ENCODE measurements at regions of chr12 and their contacts with region 1.

Region 1: GRCh38 chr12:14167005-14167628 is 185.7 kb upstream of the GRIN2B start:
- DNase-seq: peak; percentile 38 to 61 (median 47)
- ATAC-seq: peak; percentile 61; the same call in 2 of the 3 replicates
- H3K4me3 ChIP-seq: no peak overlapping the region
- H3K27ac ChIP-seq: no peak overlapping the region
- H3K4me1 ChIP-seq: no peaks in the 10 kb centered on the region
- H3K27me3 ChIP-seq: peaks cover 0 to 3% of the 10 kb centered on the region in 2 experiments; a peak in 1 of 5 replicates
- CTCF ChIP-seq: peak; percentile 73 to 84 (median 73)
- EP300 ChIP-seq: no peak
- POLR2A ChIP-seq: no peak
- RAD21 ChIP-seq: peak; percentile 69 to 77

Region 2: GRCh38 chr12:13255792-13256691 is 911.1 kb before region 1 on chr12:
- CTCF ChIA-PET with region 1: no interaction called
- POLR2A ChIA-PET with region 1: no interaction called
- in situ Hi-C with region 1: no loop called
- intact Hi-C with region 1: loop called (anchors 5 kb)
- DNase-seq: peak; percentile 86 to 92 (median 90)
- ATAC-seq: peak; percentile 100
- H3K4me3 ChIP-seq: no peak overlapping the region
- H3K27ac ChIP-seq: no peak overlapping the region
- H3K4me1 ChIP-seq: peaks cover 0 to 3% of the 10 kb centered on the region in 2 experiments; a peak in 1 of 5 replicates
- H3K27me3 ChIP-seq: no peaks in the 10 kb centered on the region; a peak in 1 of 5 replicates
- CTCF ChIP-seq: peak; percentile 88 to 91 (median 90)
- EP300 ChIP-seq: no peak
- POLR2A ChIP-seq: no peak
- RAD21 ChIP-seq: peak; percentile 59 to 72

Region 3: GRCh38 chr12:13278249-13278787 is 888.8 kb before region 1 on chr12:
- CTCF ChIA-PET with region 1: no interaction called
- POLR2A ChIA-PET with region 1: no interaction called
- in situ Hi-C with region 1: loop called (anchors 10 kb)
- intact Hi-C with region 1: no loop called
- DNase-seq: peak; percentile 63 to 79 (median 76)
- ATAC-seq: peak; percentile 100
- H3K4me3 ChIP-seq: no peak overlapping the region
- H3K27ac ChIP-seq: no peak overlapping the region
- H3K4me1 ChIP-seq: peaks cover 0 to 8% of the 10 kb centered on the region in 2 experiments; a peak in 2 of 5 replicates
- H3K27me3 ChIP-seq: peaks cover 0 to 25% of the 10 kb centered on the region in 2 experiments; a peak in 2 of 5 replicates
- CTCF ChIP-seq: peak; percentile 73 to 79 (median 78)
- EP300 ChIP-seq: no peak
- POLR2A ChIP-seq: no peak
- RAD21 ChIP-seq: peak; percentile 49 to 64

Region 4: DNA sequence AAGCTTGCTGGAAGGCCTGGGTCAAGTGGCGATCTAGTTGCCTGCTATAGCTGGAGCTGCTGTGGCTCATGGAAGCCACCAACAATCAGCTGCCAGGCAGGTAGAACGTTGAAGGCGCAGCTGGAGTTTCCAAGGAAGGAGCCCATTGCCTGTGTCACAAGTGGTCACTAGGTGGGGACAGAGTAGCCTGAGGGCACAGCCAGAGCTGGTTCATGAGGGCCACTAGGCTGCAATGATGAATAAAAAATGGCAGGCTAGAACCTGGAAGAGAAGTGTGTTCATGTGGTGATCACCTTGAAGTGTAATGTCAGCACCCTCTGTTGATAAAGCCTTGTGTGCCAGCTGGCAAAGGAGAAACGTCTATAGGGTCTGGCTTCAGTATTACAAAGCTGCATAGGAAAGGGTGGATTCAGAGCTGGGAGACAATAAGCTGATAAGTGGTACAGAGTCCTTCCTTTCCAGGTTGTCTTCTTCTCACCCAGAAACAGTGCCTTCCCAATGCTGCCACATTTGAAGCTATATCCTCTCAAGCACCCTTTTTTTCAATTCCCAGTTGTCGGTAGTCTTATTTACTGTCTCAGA is 804.8 kb before region 1 on chr12:
- CTCF ChIA-PET with region 1: no interaction called
- POLR2A ChIA-PET with region 1: interaction called, 3 read pairs
- in situ Hi-C with region 1: no loop called
- intact Hi-C with region 1: loop called (anchors 10 kb)
- DNase-seq: peak; percentile 47 to 62 (median 57)
- ATAC-seq: peak; percentile 96
- H3K4me3 ChIP-seq: no peak overlapping the region
- H3K27ac ChIP-seq: no peak overlapping the region
- H3K4me1 ChIP-seq: no peaks in the 10 kb centered on the region
- H3K27me3 ChIP-seq: peaks cover 0 to 14% of the 10 kb centered on the region in 2 experiments; a peak in 3 of 5 replicates
- CTCF ChIP-seq: peak; percentile 71 to 82 (median 82)
- EP300 ChIP-seq: no peak
- POLR2A ChIP-seq: no peak
- RAD21 ChIP-seq: peak; percentile 47 to 75

Region 5: DNA sequence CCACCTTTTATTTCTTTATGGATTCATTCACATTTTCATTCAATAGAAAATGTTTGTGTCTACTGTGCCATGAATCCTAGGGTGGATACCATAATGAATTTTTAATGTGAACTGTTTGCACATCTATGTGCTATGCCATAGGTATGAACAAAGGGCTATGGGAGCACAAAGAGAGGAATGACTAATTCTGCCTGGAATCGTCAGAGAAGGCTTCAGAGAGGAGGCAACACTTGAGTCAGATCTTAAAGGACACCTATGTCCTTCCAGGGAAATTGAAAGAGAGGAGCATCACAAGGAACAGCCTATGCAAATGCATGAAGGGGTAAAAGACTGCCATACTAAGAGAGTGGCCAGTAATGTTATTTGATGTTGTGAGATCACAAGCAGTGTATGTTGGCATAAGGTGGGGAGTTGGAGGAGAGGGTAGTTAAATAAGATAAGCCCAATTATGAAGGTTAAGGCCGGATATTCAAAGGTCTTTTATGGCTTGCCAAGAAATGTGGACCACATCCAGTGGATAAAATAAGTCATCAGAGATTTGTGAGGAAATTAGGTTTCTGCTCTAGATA is 432.4 kb before region 1 on chr12:
- CTCF ChIA-PET with region 1: interaction called, 3 read pairs
- POLR2A ChIA-PET with region 1: no interaction called
- in situ Hi-C with region 1: no loop called
- intact Hi-C with region 1: loop called (anchors 10 kb)
- DNase-seq: no peak
- ATAC-seq: no peak
- H3K4me3 ChIP-seq: no peak overlapping the region
- H3K27ac ChIP-seq: no peak overlapping the region
- H3K4me1 ChIP-seq: no peaks in the 10 kb centered on the region
- H3K27me3 ChIP-seq: no peaks in the 10 kb centered on the region
- CTCF ChIP-seq: no peak
- EP300 ChIP-seq: no peak
- POLR2A ChIP-seq: no peak
- RAD21 ChIP-seq: no peak

Region 6: GRCh38 chr12:13864081-13864673 is 302.9 kb before region 1 on chr12:
- CTCF ChIA-PET with region 1: no interaction called
- POLR2A ChIA-PET with region 1: no interaction called
- in situ Hi-C with region 1: no loop called
- intact Hi-C with region 1: loop called (anchors 10 kb)
- DNase-seq: peak; percentile 39 to 62 (median 54)
- ATAC-seq: peak; percentile 90
- H3K4me3 ChIP-seq: no peak overlapping the region
- H3K27ac ChIP-seq: no peak overlapping the region
- H3K4me1 ChIP-seq: no peaks in the 10 kb centered on the region
- H3K27me3 ChIP-seq: no peaks in the 10 kb centered on the region
- CTCF ChIP-seq: peak; percentile 62 to 79 (median 70)
- EP300 ChIP-seq: no peak
- POLR2A ChIP-seq: no peak
- RAD21 ChIP-seq: peak; percentile 10 to 58; a peak in 2 of 4 replicates

Region 7: DNA sequence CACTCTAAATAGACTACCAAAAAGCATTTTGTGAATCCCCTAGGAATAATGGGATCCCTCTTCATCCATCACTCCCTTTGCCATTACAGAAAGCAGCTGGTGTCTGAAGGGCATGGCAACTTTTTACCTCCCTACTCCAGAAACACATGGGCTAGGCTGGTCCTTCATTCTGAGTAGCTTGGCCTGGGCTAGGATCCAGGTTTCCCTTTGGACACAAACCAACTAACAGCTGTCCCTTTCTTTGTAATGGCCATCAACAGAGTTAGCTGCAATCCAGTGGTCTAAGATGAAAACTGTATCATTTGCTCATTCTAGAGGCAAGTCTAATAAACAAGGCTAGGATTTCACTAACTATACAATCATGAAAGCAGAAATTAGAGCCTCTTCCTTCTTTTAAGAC is 193.1 kb before region 1 on chr12:
- CTCF ChIA-PET with region 1: no interaction called
- POLR2A ChIA-PET with region 1: interaction called, 3 read pairs
- in situ Hi-C with region 1: no loop called
- intact Hi-C with region 1: loop called (anchors 10 kb)
- DNase-seq: no peak
- ATAC-seq: no peak
- H3K4me3 ChIP-seq: no peak overlapping the region
- H3K27ac ChIP-seq: no peak overlapping the region
- H3K4me1 ChIP-seq: no peaks in the 10 kb centered on the region
- H3K27me3 ChIP-seq: no peaks in the 10 kb centered on the region
- CTCF ChIP-seq: no peak
- EP300 ChIP-seq: no peak
- POLR2A ChIP-seq: no peak
- RAD21 ChIP-seq: no peak